ENCODE measurements at regions of chr12 and their contacts with region 1.

Region 1: DNA sequence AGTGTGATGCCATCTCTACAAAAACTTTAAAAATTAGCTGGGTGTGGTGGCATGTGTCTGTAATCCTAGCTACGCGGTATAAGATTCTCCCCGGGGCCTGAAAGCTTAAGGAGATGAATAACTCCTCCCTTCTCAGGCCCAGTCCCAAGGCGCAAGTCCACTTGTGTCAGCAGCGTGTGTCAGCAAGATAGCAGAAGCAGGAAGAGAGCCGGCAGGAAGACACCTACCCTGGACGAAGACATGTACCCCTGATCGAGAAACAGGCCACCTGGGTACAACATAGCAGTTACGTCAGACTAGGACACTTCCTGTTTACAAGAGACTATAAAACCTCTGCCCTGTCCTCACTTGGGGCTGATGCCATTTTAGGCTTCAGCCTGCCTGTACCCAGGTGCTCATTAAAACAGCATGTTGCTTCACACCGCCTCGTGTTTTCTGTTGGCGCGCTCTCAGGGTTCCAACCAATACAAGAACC is 43.3 kb downstream of the CPM start:
- DNase-seq: no peak
- H3K4me3 Mint-ChIP-seq: no peak overlapping the region
- H3K27ac Mint-ChIP-seq: peak overlapping the region; percentile 13
- H3K4me1 Mint-ChIP-seq: peaks cover 53% of the 10 kb centered on the region
- H3K27me3 Mint-ChIP-seq: no peaks in the 10 kb centered on the region

Region 2: GRCh38 chr12:68958322-68958721 is 68.6 kb after region 1 on chr12:
- intact Hi-C with region 1: loop called (anchors 1 kb)
- DNase-seq: peak; percentile 38
- H3K4me3 Mint-ChIP-seq: peak overlapping the region; percentile 3
- H3K27ac Mint-ChIP-seq: peak overlapping the region; percentile 89
- H3K4me1 Mint-ChIP-seq: peaks cover 45% of the 10 kb centered on the region
- H3K27me3 Mint-ChIP-seq: no peaks in the 10 kb centered on the region

Region 3: DNA sequence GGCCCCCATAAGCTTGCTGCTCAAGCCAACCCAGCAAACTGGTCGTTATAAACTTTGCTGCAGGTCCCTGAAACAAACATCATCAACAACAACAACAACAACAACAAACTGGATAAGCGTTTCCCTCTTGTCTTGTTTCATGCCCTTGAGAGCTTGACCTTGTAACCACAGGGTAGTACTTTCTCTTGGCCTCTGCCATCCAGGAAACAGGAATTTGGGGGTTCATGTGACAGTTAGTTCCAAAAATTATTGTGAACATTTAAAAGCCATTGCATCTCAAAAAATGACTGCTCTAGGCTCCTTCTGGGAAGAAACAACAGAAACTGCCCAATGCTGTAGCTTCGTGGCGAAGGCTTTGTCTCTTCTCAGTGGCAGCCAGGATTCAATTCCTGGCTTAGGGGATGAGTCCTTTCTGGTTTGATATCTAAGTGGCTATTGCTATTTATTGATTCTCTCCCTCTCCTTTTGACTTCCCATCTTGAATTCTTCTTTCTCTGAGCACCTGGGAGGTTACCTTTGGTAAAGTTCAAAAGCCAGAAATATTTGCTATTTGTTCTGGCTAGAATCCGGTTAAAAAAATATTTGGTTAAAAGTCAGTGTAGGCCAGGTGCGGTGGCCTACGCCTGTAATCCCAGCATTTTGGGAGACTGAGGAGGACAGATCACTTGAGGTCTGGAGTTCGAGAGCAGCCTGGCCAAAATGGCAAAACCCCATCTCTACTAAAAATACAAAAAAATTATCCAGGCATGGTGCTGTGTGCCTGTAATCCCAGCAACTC is 95.3 kb after region 1 on chr12:
- intact Hi-C with region 1: no loop called
- DNase-seq: no peak
- H3K4me3 Mint-ChIP-seq: no peak overlapping the region
- H3K27ac Mint-ChIP-seq: no peak overlapping the region
- H3K4me1 Mint-ChIP-seq: no peaks in the 10 kb centered on the region
- H3K27me3 Mint-ChIP-seq: peaks cover 4% of the 10 kb centered on the region

Region 4: GRCh38 chr12:69027411-69027881 is 137.8 kb after region 1 on chr12:
- intact Hi-C with region 1: no loop called
- DNase-seq: no peak
- H3K4me3 Mint-ChIP-seq: no peak overlapping the region
- H3K27ac Mint-ChIP-seq: no peak overlapping the region
- H3K4me1 Mint-ChIP-seq: peaks cover 3% of the 10 kb centered on the region
- H3K27me3 Mint-ChIP-seq: peaks cover 7% of the 10 kb centered on the region

Measured in activated T-helper 2 cell treated with anti-CD3 and anti-CD28 coated beads, Interferon-gamma antibody, Interleukin-2, Interleukin-4, amounts not matched to agents 10 μg/mL and 5 μg/mL and 100 μg/mL, durations not matched to agents 14 hours and 24 hours and 36 hours (primary cell).